ENCODE measurements at regions of chr7 and their contacts with region 1.

Region 1: GRCh38 chr7:130941322-130942210 is 207.6 kb upstream of the KLF14 start:
- DNase-seq: peak; percentile 72
- H3K4me3 ChIP-seq: peak overlapping the region; percentile 0 to 57 (median 36)
- H3K27ac ChIP-seq: peak overlapping the region; percentile 77 to 85 (median 84)
- H3K4me1 ChIP-seq: peaks cover 9 to 72% (median 24%) of the 10 kb centered on the region in 4 donors
- H3K27me3 ChIP-seq: no peaks in the 10 kb centered on the region
- CTCF ChIP-seq: no peak
- EP300 ChIP-seq: no peak
- POLR2A ChIP-seq: peak; percentile 43

Region 2: GRCh38 chr7:132509643-132510042 is 1568.1 kb after region 1 on chr7:
- in situ Hi-C with region 1: no loop called
- intact Hi-C with region 1: loop called (anchors 5 kb)
- DNase-seq: no peak
- H3K4me3 ChIP-seq: no peak overlapping the region
- H3K27ac ChIP-seq: no peak overlapping the region
- H3K4me1 ChIP-seq: no peaks in the 10 kb centered on the region
- H3K27me3 ChIP-seq: no peaks in the 10 kb centered on the region
- CTCF ChIP-seq: no peak
- EP300 ChIP-seq: no peak
- POLR2A ChIP-seq: no peak

Measured in transverse colon (tissue), 4 donors.